ENCODE measurements at regions of chr15 and their contacts with region 1.

Region 1: DNA sequence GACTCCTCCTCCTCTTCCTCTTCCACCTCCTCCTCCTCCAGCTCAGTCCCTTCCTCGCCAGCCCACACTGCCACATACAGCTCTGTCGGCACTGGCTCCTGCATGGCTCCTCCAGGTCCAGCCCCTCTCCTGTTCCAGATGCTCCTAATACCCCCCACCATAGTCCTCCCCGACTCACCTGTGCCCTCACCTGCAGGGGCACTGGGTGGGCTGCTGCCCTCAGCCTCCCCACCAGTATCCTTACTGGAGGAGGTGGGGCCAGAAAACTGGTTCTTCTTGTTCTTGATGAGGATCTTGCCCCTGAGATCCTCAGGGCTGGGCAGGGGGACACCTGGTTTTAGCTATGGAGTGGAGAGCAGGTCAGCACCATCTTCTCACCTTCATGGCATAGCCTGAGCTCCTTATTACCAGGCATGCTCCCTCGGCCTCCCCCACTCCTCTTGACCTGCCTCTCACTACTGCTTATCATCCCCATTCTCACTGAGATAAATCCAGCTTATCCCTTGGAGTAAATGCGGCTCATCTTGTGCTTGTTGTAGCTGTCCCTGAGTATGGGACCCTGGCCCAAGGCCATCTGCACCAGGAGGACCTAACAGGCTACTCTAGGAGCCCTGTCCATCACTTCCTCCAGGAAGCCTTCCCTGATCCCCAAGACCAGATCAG is 11.0 kb downstream of the PLCB2 start:
- DNase-seq: no peak
- H3K4me3 ChIP-seq: no peak overlapping the region
- H3K27ac ChIP-seq: no peak overlapping the region
- H3K4me1 ChIP-seq: no peaks in the 10 kb centered on the region
- H3K27me3 ChIP-seq: no peaks in the 10 kb centered on the region
- CTCF ChIP-seq: no peak
- POLR2A ChIP-seq: no peak

Region 2: DNA sequence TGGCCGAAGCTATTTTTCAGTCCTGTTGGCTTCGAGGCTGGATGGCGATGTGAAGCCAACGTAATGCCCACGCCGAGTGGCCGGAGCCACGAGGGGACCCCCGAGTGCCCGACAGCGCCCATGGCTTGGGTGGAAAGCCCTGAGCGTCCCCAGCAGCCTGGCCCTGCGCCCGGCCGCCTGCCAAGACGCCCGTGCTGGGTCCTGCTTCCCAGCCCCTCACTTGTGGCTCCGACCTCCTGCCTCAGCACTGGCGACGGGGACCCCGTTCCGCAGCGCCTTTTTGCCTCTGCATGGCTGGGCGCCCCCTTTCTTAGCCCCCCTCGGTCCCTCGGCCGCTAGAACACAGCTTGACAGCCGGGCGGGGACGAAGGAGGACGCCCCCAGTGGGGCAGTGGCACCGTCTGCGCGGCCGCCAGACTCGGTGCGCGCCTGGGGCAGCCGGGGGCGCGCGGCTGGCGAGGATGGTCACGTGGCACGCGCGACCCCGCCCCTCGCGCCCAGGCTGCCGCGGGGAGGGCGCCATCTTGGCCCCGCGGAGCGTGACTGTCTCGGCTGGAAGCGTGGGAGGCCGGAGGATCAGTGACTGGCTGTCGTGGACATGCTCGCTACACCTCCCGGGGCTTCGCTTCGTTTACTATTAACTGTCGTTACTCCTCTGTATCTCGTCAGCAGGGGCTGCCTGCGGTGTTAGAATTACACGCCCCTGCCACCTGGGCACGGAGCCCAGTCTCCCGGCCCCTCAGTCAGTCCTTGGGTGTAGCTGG is 376.0 kb before region 1 on chr15:
- intact Hi-C with region 1: no loop called
- DNase-seq: peak; percentile 72 to 73
- H3K4me3 ChIP-seq: peak overlapping the region; percentile 78 to 85 (median 83)
- H3K27ac ChIP-seq: peak overlapping the region; percentile 84 to 86
- H3K4me1 ChIP-seq: no peaks in the 10 kb centered on the region
- H3K27me3 ChIP-seq: peaks cover 0 to 2% of the 10 kb centered on the region in 2 donors
- CTCF ChIP-seq: peak in 1 of 3 donors; percentile 11
- POLR2A ChIP-seq: no peak

Region 3: GRCh38 chr15:40314723-40315276 is 18.1 kb after region 1 on chr15:
- intact Hi-C with region 1: loop called (anchors 1 kb)
- DNase-seq: no peak
- H3K4me3 ChIP-seq: no peak overlapping the region
- H3K27ac ChIP-seq: no peak overlapping the region
- H3K4me1 ChIP-seq: no peaks in the 10 kb centered on the region
- H3K27me3 ChIP-seq: no peaks in the 10 kb centered on the region
- CTCF ChIP-seq: no peak
- POLR2A ChIP-seq: no peak

Region 4: DNA sequence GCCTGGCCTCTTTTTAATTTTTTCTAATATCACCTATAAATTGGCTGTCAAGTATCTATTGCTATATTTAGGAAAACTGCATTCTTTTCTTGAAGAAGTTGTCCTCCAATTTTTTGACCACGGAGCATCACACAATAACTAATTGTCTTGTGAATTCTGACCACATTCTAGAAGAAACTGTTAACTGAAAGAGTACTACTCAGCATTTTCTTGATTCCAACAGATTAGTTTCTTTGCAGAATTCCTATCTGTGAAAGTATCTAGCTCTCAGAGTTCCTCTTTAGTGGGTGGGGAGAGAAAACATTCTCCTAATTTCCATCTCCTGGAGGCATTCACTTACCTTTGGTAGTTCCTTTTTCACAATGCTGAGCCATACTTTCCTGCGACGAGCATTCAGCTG is 788.3 kb after region 1 on chr15:
- intact Hi-C with region 1: no loop called
- DNase-seq: no peak
- H3K4me3 ChIP-seq: no peak overlapping the region
- H3K27ac ChIP-seq: no peak overlapping the region
- H3K4me1 ChIP-seq: no peaks in the 10 kb centered on the region
- H3K27me3 ChIP-seq: no peaks in the 10 kb centered on the region
- CTCF ChIP-seq: no peak
- POLR2A ChIP-seq: no peak

Measured in breast epithelium (tissue), 4 donors.